ENCODE measurements at regions of chr5 and their contacts with region 1.

Region 1: DNA sequence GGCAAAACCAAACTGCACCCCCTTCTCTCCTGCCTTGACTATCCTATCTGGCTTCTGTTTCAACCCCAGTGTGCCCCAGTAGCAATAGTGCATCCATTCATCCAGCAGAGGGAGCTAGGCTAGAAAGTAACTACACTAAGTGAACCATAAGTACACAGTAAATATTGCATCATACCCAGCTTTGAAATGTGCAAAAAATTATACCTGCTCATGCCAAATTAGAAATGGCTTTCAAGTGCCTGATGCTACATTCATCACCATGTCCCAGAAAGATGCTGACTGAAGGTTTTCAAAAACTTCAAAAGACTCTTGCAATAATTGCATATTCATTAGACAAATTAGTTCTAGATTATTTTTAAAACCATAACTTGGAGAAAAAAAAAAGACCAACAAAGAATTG is 153.5 kb downstream of the PRELID2 start:
- DNase-seq: peak in 4 of 5 donors; percentile 24 to 43 (median 26)
- ATAC-seq: peak; percentile 70 to 93 (median 83)
- H3K4me3 ChIP-seq: no peak overlapping the region
- H3K27ac ChIP-seq: peak overlapping the region in 1 of 12 donors; percentile 73
- H3K4me1 ChIP-seq: peaks cover 0 to 22% (median 4%) of the 10 kb centered on the region in 12 donors
- H3K27me3 ChIP-seq: no peaks in the 10 kb centered on the region
- CTCF ChIP-seq: peak; percentile 38 to 74 (median 61)
- POLR2A ChIP-seq: no peak

Region 2: DNA sequence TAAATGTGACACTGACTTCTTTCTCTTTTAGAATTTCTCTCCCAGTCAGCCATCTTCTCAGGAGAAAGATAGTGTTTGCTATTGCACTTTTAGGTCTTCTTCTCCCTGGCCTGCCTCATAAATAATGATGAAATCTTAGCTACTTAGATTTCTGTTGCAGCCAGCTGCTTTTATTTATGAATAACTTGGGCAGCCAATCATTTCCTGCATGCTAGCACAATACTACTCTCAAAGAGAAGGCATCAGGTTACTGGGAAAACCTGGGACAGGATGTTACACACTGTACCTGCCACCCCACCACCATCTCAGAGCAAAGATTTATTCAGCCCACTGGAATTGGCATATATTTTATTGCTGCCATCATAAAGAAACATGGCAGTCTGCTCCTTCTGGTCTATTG is 113.1 kb before region 1 on chr5:
- intact Hi-C with region 1: no loop called
- DNase-seq: no peak
- ATAC-seq: no peak
- H3K4me3 ChIP-seq: no peak overlapping the region
- H3K27ac ChIP-seq: no peak overlapping the region
- H3K4me1 ChIP-seq: no peaks in the 10 kb centered on the region
- H3K27me3 ChIP-seq: no peaks in the 10 kb centered on the region
- CTCF ChIP-seq: no peak
- POLR2A ChIP-seq: no peak

Region 3: DNA sequence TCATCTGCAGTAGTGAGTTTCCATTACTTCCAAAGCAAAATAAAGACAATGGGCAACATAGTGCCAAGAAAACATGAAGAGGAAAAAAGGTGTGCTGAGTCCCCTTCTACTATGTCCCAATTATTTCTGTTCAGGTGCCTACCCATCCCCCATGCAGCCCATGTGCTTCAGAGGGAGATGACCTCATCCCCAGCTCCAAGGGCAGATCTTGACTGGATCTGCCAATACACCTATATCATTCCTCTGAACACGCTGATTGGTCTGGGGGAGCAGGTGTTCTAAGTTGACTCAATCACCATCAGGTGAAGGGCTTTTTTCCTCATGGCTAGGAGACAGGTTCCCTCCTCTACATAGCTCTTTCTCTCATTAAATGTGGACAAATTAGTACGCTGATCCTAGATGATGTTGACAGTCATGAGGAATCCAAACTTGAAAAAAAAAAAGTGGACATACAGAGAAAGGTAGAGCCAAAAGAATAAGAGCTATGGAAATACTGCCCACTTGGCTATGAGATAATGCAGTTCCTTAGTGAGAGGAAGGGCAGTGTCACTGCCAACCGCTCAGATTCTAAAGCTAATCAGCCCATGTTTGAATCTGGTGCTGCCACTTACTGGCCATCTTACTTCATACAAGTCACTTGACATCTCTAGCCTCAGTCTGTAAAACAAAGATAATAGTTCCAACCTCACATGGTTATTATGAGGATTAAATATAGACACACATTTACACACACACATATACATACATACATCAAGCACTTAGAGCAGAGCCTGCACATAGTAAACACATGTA is 130.3 kb after region 1 on chr5:
- intact Hi-C with region 1: loop called in 1 of 10 experiments (anchors 10 kb)
- DNase-seq: no peak
- ATAC-seq: peak in 3 of 4 donors; percentile 76 to 82 (median 81)
- H3K4me3 ChIP-seq: no peak overlapping the region
- H3K27ac ChIP-seq: no peak overlapping the region
- H3K4me1 ChIP-seq: peaks cover 0 to 9% (median 0%) of the 10 kb centered on the region in 12 donors
- H3K27me3 ChIP-seq: no peaks in the 10 kb centered on the region
- CTCF ChIP-seq: peak; percentile 6 to 50 (median 20)
- POLR2A ChIP-seq: no peak

Region 4: DNA sequence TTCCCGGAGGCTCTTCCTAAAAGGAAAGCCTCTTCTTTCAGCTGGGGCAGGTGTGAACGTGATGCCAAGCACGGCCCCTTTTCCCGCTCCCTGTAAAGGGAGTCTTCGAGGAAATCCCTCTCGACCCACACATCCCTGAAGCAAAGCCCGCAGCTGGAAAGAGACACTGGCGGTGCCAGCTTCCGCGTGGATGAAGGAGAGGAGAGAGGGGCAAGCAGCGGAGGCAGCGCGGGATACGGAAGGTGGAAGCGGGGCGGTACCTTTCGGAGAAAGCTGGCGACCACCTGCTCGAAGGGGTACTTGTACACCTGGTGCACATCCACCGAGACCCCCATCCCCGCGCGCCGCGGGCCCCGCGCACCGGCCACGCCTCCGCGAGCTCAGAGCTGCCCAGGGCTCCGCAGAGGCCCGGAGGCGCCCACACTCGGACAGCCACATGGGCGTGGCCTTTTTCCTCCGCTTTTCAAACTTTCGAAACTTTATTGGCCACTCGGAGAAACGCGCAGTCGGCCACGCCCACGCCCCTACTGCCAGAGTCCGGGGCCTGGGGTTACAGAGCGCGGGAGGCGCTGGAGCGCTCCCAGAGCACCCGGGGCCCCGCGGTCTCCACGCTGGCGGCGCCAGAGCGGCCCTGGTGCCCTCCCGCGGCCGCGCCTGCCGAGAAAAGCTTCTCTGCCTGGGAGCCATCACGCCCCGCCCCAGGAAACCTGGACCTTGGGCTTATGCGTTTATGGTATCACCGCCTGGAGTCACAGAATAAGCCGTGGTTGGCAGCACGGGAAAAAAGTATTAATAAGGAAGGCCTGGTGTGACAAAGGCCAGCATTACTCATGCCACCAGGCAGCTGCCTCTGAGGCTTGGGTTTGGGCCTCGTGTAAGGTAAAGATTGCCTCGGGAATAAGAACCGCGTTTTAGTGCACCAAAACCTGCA is 153.5 kb after region 1 on chr5 and contains the start of gene PRELID2:
- intact Hi-C with region 1: loop called in 1 of 10 experiments (anchors 10 kb)
- DNase-seq: peak; percentile 89 to 93 (median 91)
- ATAC-seq: peak; percentile 88 to 97 (median 95)
- H3K4me3 ChIP-seq: peak within 1 kb of the TSS; percentile 65 to 85 (median 76)
- H3K27ac ChIP-seq: peak within 1 kb of the TSS; percentile 40 to 82 (median 69)
- H3K4me1 ChIP-seq: peaks cover 0 to 26% (median 13%) of the 10 kb centered on the region in 12 donors
- H3K27me3 ChIP-seq: no peaks in the 10 kb centered on the region
- CTCF ChIP-seq: peak in 3 of 12 donors; percentile 12 to 32 (median 28)
- POLR2A ChIP-seq: peak in 1 of 2 donors; percentile 75
- total RNA-seq, gene PRELID2: 6.5 to 26.7 (median 10.6) TPM

Region 5: DNA sequence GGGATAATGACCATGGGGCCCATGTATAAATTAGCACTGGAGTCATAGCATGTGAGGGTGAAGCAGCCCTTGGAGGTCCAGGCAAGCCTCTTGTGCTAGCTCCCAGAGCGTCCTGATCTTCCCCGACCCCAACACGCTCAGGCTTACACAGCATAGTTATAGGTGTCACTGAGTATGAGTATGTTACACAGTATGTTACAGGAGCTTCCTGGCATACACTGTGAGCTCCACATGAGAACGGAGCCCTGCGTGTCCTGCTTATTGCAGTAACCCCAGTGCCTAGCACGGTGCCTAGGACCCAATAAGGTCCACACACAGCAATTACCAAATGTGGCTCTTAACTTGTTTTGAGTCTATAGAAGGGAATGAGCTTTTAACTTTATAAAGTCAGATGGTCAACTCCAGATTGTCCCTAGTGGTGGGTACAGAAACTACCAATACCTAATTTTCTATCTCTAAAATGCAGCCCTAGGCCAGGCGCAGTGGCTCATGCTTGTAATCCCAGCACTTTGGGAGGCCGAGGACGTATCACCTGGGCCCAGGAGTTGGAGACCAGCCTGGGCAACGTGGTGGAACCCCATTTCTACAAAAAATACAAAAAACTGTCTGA is 359.6 kb after region 1 on chr5:
- intact Hi-C with region 1: loop called in 7 of 10 experiments (anchors 5 to 10 kb)
- DNase-seq: no peak
- ATAC-seq: peak; percentile 27 to 57 (median 44)
- H3K4me3 ChIP-seq: no peak overlapping the region
- H3K27ac ChIP-seq: peak overlapping the region in 7 of 12 donors; percentile 9 to 62 (median 38)
- H3K4me1 ChIP-seq: peaks cover 0 to 13% (median 0%) of the 10 kb centered on the region in 12 donors
- H3K27me3 ChIP-seq: no peaks in the 10 kb centered on the region
- CTCF ChIP-seq: peak in 11 of 12 donors; percentile 14 to 53 (median 30)
- POLR2A ChIP-seq: no peak

Region 6: DNA sequence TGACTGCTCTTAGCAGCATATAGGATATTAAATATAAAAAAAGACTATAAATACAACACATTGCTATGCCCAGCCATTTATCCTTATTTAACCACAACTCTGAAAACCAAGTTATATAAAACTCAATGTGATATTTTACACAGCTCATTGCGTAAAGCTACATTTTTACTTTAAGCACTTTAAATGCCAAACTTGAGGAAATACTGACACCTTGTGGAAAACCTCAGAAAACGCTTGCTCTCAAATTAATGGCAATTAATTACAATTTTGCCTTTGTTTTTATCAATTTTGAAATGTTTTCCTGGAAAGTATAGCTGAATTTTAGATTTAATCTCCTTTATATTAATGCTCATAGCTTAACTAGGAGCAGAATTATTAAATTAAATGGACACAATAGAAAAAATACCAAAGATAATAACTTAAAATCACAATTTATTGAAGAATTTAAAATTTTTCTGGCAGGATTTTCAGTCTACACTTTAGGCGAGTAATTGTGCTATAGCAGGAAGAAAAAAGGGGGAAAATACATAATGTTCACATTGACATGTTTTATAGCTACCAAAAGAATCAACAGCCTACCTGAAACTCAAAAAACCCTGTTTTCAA is 448.9 kb after region 1 on chr5:
- intact Hi-C with region 1: loop called in 3 of 10 experiments (anchors 5 to 10 kb)
- DNase-seq: no peak
- ATAC-seq: peak in 1 of 4 donors; percentile 20
- H3K4me3 ChIP-seq: no peak overlapping the region
- H3K27ac ChIP-seq: no peak overlapping the region
- H3K4me1 ChIP-seq: no peaks in the 10 kb centered on the region
- H3K27me3 ChIP-seq: no peaks in the 10 kb centered on the region
- CTCF ChIP-seq: peak; percentile 33 to 74 (median 58)
- POLR2A ChIP-seq: no peak